AG04450 (cell line): ENCODE measurements at regions of chr11 and their contacts with region 1.

Region 1: GRCh38 chr11:19951558-19952115 is 208.6 kb downstream of the DBX1 start:
- DNase-seq: no peak
- H3K4me3 ChIP-seq: no peak overlapping the region
- H3K27ac ChIP-seq: no peak overlapping the region
- H3K27me3 ChIP-seq: no peaks in the 10 kb centered on the region
- CTCF ChIP-seq: peak; percentile 71

Region 2: GRCh38 chr11:19259487-19260345 is 691.9 kb before region 1 on chr11:
- CTCF ChIA-PET with region 1: interaction called, 10 read pairs
- POLR2A ChIA-PET with region 1: no interaction called
- DNase-seq: peak; percentile 26
- H3K4me3 ChIP-seq: no peak overlapping the region
- H3K27ac ChIP-seq: no peak overlapping the region
- H3K27me3 ChIP-seq: peaks cover 32% of the 10 kb centered on the region
- CTCF ChIP-seq: peak; percentile 96

Region 3: GRCh38 chr11:19938169-19938856 is 13.3 kb before region 1 on chr11:
- CTCF ChIA-PET with region 1: interaction called, 19 read pairs
- POLR2A ChIA-PET with region 1: interaction called, 3 read pairs
- DNase-seq: no peak
- H3K4me3 ChIP-seq: no peak overlapping the region
- H3K27ac ChIP-seq: no peak overlapping the region
- H3K27me3 ChIP-seq: no peaks in the 10 kb centered on the region
- CTCF ChIP-seq: peak; percentile 78

Region 4: GRCh38 chr11:19962801-19963175 is 11.2 kb after region 1 on chr11:
- CTCF ChIA-PET with region 1: interaction called, 18 read pairs
- POLR2A ChIA-PET with region 1: interaction called, 5 read pairs
- DNase-seq: peak; percentile 82
- H3K4me3 ChIP-seq: no peak overlapping the region
- H3K27ac ChIP-seq: peak overlapping the region; percentile 91
- H3K27me3 ChIP-seq: no peaks in the 10 kb centered on the region
- CTCF ChIP-seq: no peak

Region 5: DNA sequence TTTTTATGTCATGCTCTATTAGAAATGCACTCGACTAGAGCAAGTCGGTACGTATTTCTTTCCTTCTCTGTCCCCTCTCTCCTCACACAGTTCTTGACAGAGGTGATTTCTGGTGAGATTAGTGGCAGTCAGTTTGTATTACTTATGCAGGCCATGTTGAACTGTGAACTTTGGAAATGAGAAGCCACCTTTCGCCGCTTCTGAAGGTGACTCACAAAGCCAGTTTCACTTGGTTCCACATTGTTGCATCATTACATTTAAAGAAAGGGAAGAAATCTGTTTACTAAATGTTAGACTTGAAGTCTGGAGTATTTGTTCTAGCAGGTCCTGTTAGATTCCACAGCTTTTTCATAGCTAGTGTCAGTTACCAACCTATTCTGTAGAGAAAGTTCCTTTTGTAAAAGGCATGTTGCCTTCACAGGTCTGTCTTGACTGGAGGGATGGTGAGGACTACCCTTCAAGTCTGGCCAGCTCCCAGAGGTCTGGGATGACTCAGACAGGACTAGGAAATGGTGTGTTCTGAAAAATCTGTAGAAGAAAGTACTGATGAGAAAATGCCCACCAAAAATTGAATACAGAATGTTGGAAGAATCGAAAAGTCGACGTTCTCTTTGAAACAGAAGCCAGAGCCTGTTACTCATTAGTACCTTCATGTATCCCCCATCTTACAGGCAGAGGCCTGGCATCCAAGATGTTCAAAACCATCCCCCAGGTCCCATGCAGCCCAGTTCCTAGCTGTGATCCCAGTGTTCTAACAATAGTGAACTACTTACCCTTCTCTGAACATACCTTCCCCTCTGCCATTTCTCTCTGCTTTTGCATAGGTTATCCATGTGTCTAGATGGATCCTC is 27.3 kb after region 1 on chr11:
- CTCF ChIA-PET with region 1: interaction called, 13 read pairs
- POLR2A ChIA-PET with region 1: no interaction called
- DNase-seq: peak; percentile 65
- H3K4me3 ChIP-seq: no peak overlapping the region
- H3K27ac ChIP-seq: peak overlapping the region; percentile 79
- H3K27me3 ChIP-seq: no peaks in the 10 kb centered on the region
- CTCF ChIP-seq: no peak

Region 6: DNA sequence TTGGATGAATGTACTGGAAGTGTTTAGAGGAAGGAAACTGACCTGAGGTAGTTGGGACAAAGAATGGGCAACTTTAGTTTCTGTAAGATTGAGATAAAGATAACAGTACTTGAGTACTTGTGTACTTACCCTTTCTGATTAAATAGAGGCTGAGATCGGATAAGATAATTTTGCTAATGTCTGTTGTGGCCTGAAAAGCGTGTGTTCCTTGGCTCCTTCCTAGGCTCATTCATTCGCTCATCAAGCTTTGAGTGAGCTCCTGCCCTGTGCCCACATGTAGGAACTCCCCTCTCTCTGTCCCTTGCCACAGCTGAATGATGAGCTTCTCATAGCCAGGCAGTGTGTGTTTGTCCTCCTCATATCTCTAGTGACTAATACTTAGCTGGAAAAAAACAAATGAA is 90.5 kb after region 1 on chr11:
- CTCF ChIA-PET with region 1: no interaction called
- POLR2A ChIA-PET with region 1: no interaction called
- DNase-seq: no peak
- H3K4me3 ChIP-seq: no peak overlapping the region
- H3K27ac ChIP-seq: no peak overlapping the region
- H3K27me3 ChIP-seq: no peaks in the 10 kb centered on the region
- CTCF ChIP-seq: no peak

Region 7: DNA sequence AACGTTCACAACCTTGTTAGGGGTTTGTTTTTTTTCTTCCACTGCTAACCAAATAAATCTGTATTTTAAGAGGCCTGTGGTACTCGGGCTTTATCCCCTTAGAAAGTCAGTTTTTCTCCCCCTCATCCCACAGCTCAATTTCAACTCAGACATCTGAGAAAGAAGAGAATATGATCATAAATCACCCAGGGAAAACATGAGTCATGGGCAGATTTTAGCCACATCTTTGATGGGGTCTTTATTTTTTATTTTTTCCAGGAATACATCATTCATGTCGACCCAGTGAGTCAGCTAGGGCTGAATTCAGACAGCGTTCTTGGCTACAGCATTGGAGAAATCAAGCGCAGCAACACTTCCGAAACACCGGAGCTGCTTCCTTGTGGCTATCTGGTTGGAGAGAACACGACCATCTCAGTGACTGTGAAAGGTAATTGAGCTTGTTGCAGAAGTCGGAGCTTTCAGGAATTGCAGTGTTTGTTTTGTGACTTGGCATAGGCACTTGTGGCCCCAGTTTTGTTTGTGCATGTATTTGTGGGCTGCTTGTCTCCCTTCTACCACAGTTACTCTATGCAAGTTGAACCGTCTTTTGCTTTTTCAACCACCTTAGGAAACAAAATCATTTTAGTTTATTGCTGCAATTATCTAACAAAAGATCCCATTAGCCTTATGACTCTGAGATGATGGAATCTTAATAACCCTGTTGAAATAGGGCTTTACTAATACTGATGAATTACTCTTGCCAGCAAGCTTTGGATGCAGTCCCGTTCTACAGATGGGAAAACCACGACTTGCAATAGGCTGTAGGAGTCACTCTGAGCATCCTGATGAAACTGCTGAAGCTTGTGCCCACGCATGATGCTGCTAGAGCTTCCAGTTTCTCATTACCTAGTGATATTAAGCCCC is 145.9 kb after region 1 on chr11:
- CTCF ChIA-PET with region 1: interaction called, 10 read pairs
- POLR2A ChIA-PET with region 1: interaction called, 3 read pairs
- DNase-seq: no peak
- H3K4me3 ChIP-seq: no peak overlapping the region
- H3K27ac ChIP-seq: peak overlapping the region; percentile 60
- H3K27me3 ChIP-seq: no peaks in the 10 kb centered on the region
- CTCF ChIP-seq: no peak

Region 8: DNA sequence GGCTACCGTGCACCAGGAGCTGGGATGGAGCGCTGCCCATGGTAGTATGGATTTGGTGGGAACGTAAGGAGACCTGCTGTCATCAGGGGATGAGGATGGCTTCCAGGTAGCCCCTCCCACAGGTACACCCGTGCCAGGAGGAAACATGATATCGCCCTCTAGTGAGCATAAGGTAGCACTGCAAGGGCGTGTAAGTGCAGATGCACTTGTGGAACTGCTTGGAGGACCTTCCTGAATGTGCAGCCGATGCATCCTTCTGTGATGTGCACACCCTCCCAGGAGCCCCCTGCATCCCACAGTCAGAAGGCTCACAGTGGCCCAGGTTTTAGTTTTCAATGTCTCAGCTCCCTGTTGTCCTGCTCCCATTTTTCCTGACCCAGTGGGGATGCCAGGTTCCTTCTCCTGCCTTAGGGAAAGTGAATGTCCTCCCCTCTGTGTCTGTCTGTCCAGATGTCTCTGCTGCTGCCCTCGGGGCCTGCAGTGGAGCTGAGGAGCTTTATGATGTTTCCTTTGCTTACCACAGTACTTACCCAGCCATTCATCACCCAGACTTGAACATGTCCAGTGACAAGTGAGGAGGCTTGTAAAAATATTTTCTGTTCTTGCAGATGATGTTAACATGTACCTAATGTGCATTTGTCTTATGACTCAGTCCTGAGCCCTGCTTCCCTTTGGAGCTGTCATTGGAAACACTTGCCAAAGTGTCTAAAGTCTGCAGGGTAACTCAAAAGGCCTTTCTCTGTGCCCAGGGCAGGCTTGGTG is 159.5 kb after region 1 on chr11:
- CTCF ChIA-PET with region 1: interaction called, 57 read pairs
- POLR2A ChIA-PET with region 1: interaction called, 3 read pairs
- DNase-seq: no peak
- H3K4me3 ChIP-seq: no peak overlapping the region
- H3K27ac ChIP-seq: peak overlapping the region; percentile 97
- H3K27me3 ChIP-seq: no peaks in the 10 kb centered on the region
- CTCF ChIP-seq: peak; percentile 88